PC-9 (cell line): ENCODE measurements at regions of chr9 and their contacts with region 1.

Region 1: GRCh38 chr9:133144137-133144903 is 19.4 kb downstream of the GBGT1 start:
- DNase-seq: peak; percentile 80 to 93
- H3K4me3 ChIP-seq: peak overlapping the region; percentile 29; the same call in 1 of the 2 replicates
- H3K27ac ChIP-seq: no peak overlapping the region
- H3K4me1 ChIP-seq: peaks cover 32% of the 10 kb centered on the region
- H3K27me3 ChIP-seq: no peaks in the 10 kb centered on the region
- CTCF ChIP-seq: peak; percentile 97

Region 2: DNA sequence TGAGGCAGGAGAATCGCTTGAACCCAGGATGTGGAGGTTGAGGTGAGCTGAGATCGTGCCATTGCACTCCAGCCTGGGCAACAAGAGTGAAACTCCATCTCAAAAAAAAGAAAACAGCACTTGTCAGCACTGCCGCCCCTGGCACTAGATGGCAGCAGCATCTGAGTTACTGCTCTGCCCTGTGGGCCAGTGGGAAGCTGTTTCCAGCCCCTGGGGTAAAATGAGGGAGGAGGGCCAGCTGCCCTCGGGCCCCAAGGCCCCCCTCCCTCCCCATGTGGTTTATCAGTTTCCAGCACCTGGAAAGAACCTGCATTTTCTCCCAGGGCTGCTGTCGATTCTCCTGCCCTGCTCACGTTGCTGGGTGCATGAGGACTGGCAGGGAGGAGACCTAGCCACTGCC is 95.8 kb before region 1 on chr9:
- CTCF ChIA-PET with region 1: interaction called, 3 read pairs
- POLR2A ChIA-PET with region 1: no interaction called
- intact Hi-C with region 1: loop called (anchors 1 kb)
- DNase-seq: peak in 1 of 2 experiments; percentile 34
- H3K4me3 ChIP-seq: no peak overlapping the region
- H3K27ac ChIP-seq: no peak overlapping the region
- H3K4me1 ChIP-seq: no peaks in the 10 kb centered on the region
- H3K27me3 ChIP-seq: no peaks in the 10 kb centered on the region
- CTCF ChIP-seq: peak; percentile 59

Region 3: GRCh38 chr9:133089271-133089671 is 55.0 kb before region 1 on chr9:
- CTCF ChIA-PET with region 1: no interaction called
- POLR2A ChIA-PET with region 1: no interaction called
- intact Hi-C with region 1: no loop called
- DNase-seq: no peak
- H3K4me3 ChIP-seq: no peak overlapping the region
- H3K27ac ChIP-seq: no peak overlapping the region
- H3K4me1 ChIP-seq: no peaks in the 10 kb centered on the region
- H3K27me3 ChIP-seq: no peaks in the 10 kb centered on the region
- CTCF ChIP-seq: no peak

Region 4: GRCh38 chr9:133108794-133109641 is 35.3 kb before region 1 on chr9:
- CTCF ChIA-PET with region 1: interaction called, 36 read pairs
- POLR2A ChIA-PET with region 1: no interaction called
- intact Hi-C with region 1: no loop called
- DNase-seq: no peak
- H3K4me3 ChIP-seq: no peak overlapping the region
- H3K27ac ChIP-seq: no peak overlapping the region
- H3K4me1 ChIP-seq: peaks cover 2% of the 10 kb centered on the region
- H3K27me3 ChIP-seq: no peaks in the 10 kb centered on the region
- CTCF ChIP-seq: no peak

Region 5: GRCh38 chr9:133121198-133121939 is 23.0 kb before region 1 on chr9 and contains the start of gene RALGDS:
- CTCF ChIA-PET with region 1: interaction called, 6 read pairs
- POLR2A ChIA-PET with region 1: interaction called, 27 read pairs
- intact Hi-C with region 1: loop called (anchors 1 kb)
- DNase-seq: peak; percentile 85 to 87
- H3K4me3 ChIP-seq: peak within 1 kb of the TSS; percentile 67
- H3K27ac ChIP-seq: peak within 1 kb of the TSS; percentile 64
- H3K4me1 ChIP-seq: peaks cover 15% of the 10 kb centered on the region
- H3K27me3 ChIP-seq: no peaks in the 10 kb centered on the region
- CTCF ChIP-seq: no peak
- total RNA-seq, gene RALGDS: 24.8 and 30.0 TPM in 2 replicates